Transverse colon (tissue), 4 donors: ENCODE measurements at regions of chr1 and their contacts with region 1.

Region 1: GRCh38 chr1:208803011-208803811 is 559.0 kb upstream of the PLXNA2 start:
- DNase-seq: no peak
- H3K4me3 ChIP-seq: no peak overlapping the region
- H3K27ac ChIP-seq: no peak overlapping the region
- H3K4me1 ChIP-seq: no peaks in the 10 kb centered on the region
- H3K27me3 ChIP-seq: no peaks in the 10 kb centered on the region
- CTCF ChIP-seq: no peak
- EP300 ChIP-seq: no peak
- POLR2A ChIP-seq: no peak

Region 2: GRCh38 chr1:208681878-208682663 is 121.1 kb before region 1 on chr1:
- in situ Hi-C with region 1: no loop called
- intact Hi-C with region 1: no loop called
- DNase-seq: no peak
- H3K4me3 ChIP-seq: no peak overlapping the region
- H3K27ac ChIP-seq: peak overlapping the region in 2 of 4 donors; percentile 33 to 52
- H3K4me1 ChIP-seq: peaks cover 0 to 18% (median 1%) of the 10 kb centered on the region in 4 donors
- H3K27me3 ChIP-seq: no peaks in the 10 kb centered on the region
- CTCF ChIP-seq: no peak
- EP300 ChIP-seq: no peak
- POLR2A ChIP-seq: no peak

Region 3: DNA sequence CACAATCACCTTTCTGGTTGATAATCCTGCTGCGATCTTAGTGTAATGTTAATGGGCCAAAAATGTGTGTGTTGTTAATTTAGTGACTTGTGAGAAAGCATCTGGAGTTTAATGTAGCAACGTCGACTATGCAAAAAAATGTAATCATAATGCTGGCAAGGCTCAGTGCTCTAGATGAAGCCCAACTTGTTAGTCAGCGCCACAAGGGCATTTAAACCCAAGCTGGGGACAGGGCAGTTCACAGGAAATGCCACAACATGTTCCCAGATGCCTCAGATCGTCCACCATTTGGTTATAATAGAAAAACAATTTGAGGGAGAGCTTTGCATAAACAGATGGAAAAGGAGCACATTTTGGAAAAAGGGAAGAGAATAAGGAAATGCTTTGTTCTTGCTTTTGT is 26.4 kb after region 1 on chr1:
- in situ Hi-C with region 1: no loop called
- intact Hi-C with region 1: loop called (anchors 1 kb)
- DNase-seq: no peak
- H3K4me3 ChIP-seq: no peak overlapping the region
- H3K27ac ChIP-seq: no peak overlapping the region
- H3K4me1 ChIP-seq: no peaks in the 10 kb centered on the region
- H3K27me3 ChIP-seq: no peaks in the 10 kb centered on the region
- CTCF ChIP-seq: no peak
- EP300 ChIP-seq: no peak
- POLR2A ChIP-seq: no peak

Region 4: GRCh38 chr1:209190591-209191261 is 387.5 kb after region 1 on chr1:
- in situ Hi-C with region 1: no loop called
- intact Hi-C with region 1: no loop called
- DNase-seq: peak; percentile 47
- H3K4me3 ChIP-seq: no peak overlapping the region
- H3K27ac ChIP-seq: peak overlapping the region; percentile 16 to 42 (median 28)
- H3K4me1 ChIP-seq: peaks cover 0 to 12% (median 2%) of the 10 kb centered on the region in 4 donors
- H3K27me3 ChIP-seq: no peaks in the 10 kb centered on the region
- CTCF ChIP-seq: peak in 3 of 5 experiments; percentile 29 to 33 (median 33)
- EP300 ChIP-seq: no peak
- POLR2A ChIP-seq: no peak